ENCODE measurements at regions of chr7 and their contacts with region 1.

Region 1: DNA sequence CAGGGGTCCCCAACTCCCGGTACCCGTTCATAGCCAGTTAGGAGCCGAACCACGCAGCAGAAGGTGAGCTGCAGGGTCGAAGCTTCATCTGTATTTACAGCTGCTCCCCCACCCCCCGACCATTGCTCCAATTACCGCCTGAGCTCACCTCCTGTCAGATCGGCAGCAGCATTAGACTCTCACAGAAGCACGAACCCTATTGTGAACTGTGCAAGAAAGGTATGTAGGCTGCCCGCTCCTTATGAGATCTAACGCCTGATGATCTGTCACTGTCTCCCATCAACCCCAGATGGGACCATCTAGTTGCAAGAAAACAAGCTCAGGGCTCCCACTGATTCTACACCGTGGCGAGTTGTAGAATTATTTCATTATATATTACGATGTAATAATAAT is 14.6 kb upstream of the AZGP1 start:
- DNase-seq: no peak
- ATAC-seq: peak; percentile 12
- H3K4me3 ChIP-seq: no peak overlapping the region
- H3K27ac ChIP-seq: no peak overlapping the region
- H3K4me1 ChIP-seq: no peaks in the 10 kb centered on the region
- H3K27me3 ChIP-seq: peaks cover 18% of the 10 kb centered on the region
- CTCF ChIP-seq: no peak
- POLR2A ChIP-seq: no peak
- RAD21 ChIP-seq: no peak

Region 2: GRCh38 chr7:98949336-98950044 is 1041.0 kb before region 1 on chr7:
- CTCF ChIA-PET with region 1: no interaction called
- POLR2A ChIA-PET with region 1: no interaction called
- dilution Hi-C with region 1: no loop called
- in situ Hi-C with region 1: no loop called
- intact Hi-C with region 1: no loop called
- DNase-seq: no peak
- ATAC-seq: no peak
- H3K4me3 ChIP-seq: no peak overlapping the region
- H3K27ac ChIP-seq: no peak overlapping the region
- H3K4me1 ChIP-seq: no peaks in the 10 kb centered on the region
- H3K27me3 ChIP-seq: no peaks in the 10 kb centered on the region
- CTCF ChIP-seq: no peak
- POLR2A ChIP-seq: no peak
- RAD21 ChIP-seq: no peak

Region 3: DNA sequence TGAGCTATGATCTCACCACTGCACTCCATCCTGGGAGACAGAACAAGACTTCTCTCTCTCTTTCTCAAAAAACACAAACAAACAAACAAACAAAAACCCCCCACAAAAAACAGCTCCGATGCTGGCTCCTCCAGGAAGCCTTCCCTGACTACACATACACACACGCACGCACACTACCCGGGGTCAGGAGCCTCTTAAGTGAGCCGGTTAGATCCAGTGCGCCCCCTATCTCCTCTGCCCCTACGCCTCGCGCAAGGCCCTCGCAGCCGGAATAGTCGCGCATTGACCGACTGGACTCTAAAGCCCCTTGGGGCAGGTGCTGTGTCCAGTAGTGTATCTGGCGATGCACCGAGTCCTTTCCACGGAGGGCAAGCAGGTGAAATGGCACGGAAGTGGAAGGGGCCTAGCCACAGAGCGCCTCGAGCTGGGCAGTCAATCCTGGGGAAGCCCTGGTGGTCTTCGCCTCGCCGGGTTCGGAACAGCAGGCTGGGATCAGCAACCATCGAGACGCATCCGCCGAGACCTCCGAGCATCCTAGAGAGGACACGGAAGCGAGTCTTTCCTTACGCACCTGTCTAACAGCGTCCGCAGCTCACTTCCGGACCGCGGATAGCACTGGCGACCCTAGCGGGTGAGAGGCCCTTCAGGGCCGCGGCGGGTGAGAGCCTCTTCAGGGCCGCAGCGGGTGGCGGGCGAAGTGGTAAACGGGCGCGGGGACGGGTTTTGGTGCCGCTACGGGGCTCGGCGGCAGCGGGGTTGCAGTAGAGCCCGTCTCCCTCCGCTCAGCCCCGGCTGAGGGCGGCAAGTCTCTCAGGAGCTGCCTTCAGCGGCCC is 373.9 kb before region 1 on chr7 and contains the start of gene ZSCAN25:
- CTCF ChIA-PET with region 1: no interaction called
- POLR2A ChIA-PET with region 1: no interaction called
- dilution Hi-C with region 1: no loop called
- in situ Hi-C with region 1: no loop called
- intact Hi-C with region 1: loop called (anchors 5 kb)
- DNase-seq: peak; percentile 92
- ATAC-seq: peak; percentile 96
- H3K4me3 ChIP-seq: peak within 1 kb of the TSS; percentile 63
- H3K27ac ChIP-seq: peak within 1 kb of the TSS; percentile 54
- H3K4me1 ChIP-seq: no peaks in the 10 kb centered on the region
- H3K27me3 ChIP-seq: no peaks in the 10 kb centered on the region
- CTCF ChIP-seq: peak; percentile 52
- POLR2A ChIP-seq: peak; percentile 72
- RAD21 ChIP-seq: peak; percentile 28
- total RNA-seq, gene ZSCAN25: 9.0 and 9.2 TPM in 2 replicates

Region 4: DNA sequence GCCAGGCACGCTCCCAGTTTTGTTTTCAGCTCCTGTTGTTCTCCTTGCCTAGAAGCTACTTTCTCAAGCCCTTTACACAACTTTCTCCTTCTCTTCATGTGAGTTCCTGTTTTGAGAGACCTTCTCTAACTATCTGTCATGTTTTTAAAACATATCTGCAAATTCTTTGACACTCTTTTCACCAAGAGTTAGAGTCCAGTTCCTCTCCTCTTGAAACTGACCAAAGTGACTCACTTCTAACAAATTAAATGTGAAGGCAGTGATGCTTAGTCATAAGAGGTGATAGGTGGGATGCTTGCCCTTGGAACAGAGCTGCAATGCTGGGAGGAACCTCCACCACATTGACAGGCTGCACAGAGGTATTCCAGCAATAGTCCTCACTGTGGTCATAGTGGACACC is 348.4 kb before region 1 on chr7:
- CTCF ChIA-PET with region 1: no interaction called
- POLR2A ChIA-PET with region 1: no interaction called
- dilution Hi-C with region 1: no loop called
- in situ Hi-C with region 1: no loop called
- intact Hi-C with region 1: no loop called
- DNase-seq: peak; percentile 26
- ATAC-seq: peak; percentile 57
- H3K4me3 ChIP-seq: no peak overlapping the region
- H3K27ac ChIP-seq: no peak overlapping the region
- H3K4me1 ChIP-seq: no peaks in the 10 kb centered on the region
- H3K27me3 ChIP-seq: no peaks in the 10 kb centered on the region
- CTCF ChIP-seq: no peak
- POLR2A ChIP-seq: no peak
- RAD21 ChIP-seq: no peak

Region 5: GRCh38 chr7:99910976-99911375 is 79.5 kb before region 1 on chr7:
- CTCF ChIA-PET with region 1: interaction called, 3 read pairs
- POLR2A ChIA-PET with region 1: no interaction called
- dilution Hi-C with region 1: no loop called
- in situ Hi-C with region 1: loop called (anchors 5 kb)
- intact Hi-C with region 1: loop called (anchors 1 kb)
- DNase-seq: no peak
- ATAC-seq: no peak
- H3K4me3 ChIP-seq: no peak overlapping the region
- H3K27ac ChIP-seq: no peak overlapping the region
- H3K4me1 ChIP-seq: peaks cover 2% of the 10 kb centered on the region; the same call in 1 of the 2 replicates
- H3K27me3 ChIP-seq: no peaks in the 10 kb centered on the region
- CTCF ChIP-seq: no peak
- POLR2A ChIP-seq: no peak
- RAD21 ChIP-seq: no peak

Region 6: GRCh38 chr7:99955235-99955634 is 35.2 kb before region 1 on chr7:
- CTCF ChIA-PET with region 1: no interaction called
- POLR2A ChIA-PET with region 1: interaction called, 12 read pairs
- dilution Hi-C with region 1: no loop called
- in situ Hi-C with region 1: no loop called
- intact Hi-C with region 1: no loop called
- DNase-seq: no peak
- ATAC-seq: no peak
- H3K4me3 ChIP-seq: no peak overlapping the region
- H3K27ac ChIP-seq: no peak overlapping the region
- H3K4me1 ChIP-seq: peaks cover 2% of the 10 kb centered on the region; the same call in 1 of the 2 replicates
- H3K27me3 ChIP-seq: peaks cover 7% of the 10 kb centered on the region
- CTCF ChIP-seq: no peak
- POLR2A ChIP-seq: no peak
- RAD21 ChIP-seq: no peak